GM12878 (cell line): ENCODE measurements at regions of chr9 and their contacts with region 1.

Region 1: DNA sequence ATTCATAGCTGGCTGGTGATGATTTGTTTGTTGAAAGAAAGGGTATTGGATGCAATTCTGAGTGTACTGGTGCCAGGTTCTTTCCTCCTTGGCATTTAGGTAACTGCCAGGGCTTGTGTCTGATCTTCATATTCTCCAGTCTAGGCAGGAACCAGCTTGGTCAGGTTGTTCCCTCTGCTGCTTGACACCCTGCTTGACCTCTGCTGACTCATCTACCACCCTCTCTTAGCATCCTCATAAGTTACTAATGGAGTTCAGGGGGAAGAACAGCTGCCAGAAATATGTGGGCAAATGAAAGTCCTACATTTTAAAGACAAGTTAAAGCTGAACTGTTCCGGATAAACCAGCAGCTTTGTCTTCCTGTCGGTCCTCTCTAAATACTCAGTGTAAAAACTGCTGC is 116.1 kb upstream of the TNC start:
- DNase-seq: no peak
- ATAC-seq: peak; percentile 60
- H3K4me3 ChIP-seq: no peak overlapping the region
- H3K27ac ChIP-seq: no peak overlapping the region
- H3K4me1 ChIP-seq: no peaks in the 10 kb centered on the region
- H3K27me3 ChIP-seq: no peaks in the 10 kb centered on the region; a peak in 1 of 4 replicates
- CTCF ChIP-seq: no peak
- EP300 ChIP-seq: no peak
- POLR2A ChIP-seq: no peak
- RAD21 ChIP-seq: no peak

Region 2: GRCh38 chr9:115146581-115147021 is 87.5 kb before region 1 on chr9:
- CTCF ChIA-PET with region 1: no interaction called
- POLR2A ChIA-PET with region 1: no interaction called
- RAD21 ChIA-PET with region 1: no interaction called
- SMC1A ChIA-PET with region 1: no interaction called
- in situ Hi-C with region 1: no loop called
- intact Hi-C with region 1: no loop called
- DNase-seq: no peak
- ATAC-seq: no peak
- H3K4me3 ChIP-seq: no peak overlapping the region
- H3K27ac ChIP-seq: no peak overlapping the region
- H3K4me1 ChIP-seq: no peaks in the 10 kb centered on the region
- H3K27me3 ChIP-seq: no peaks in the 10 kb centered on the region
- CTCF ChIP-seq: no peak
- EP300 ChIP-seq: no peak
- POLR2A ChIP-seq: no peak
- RAD21 ChIP-seq: no peak

Region 3: GRCh38 chr9:115182264-115182663 is 51.8 kb before region 1 on chr9:
- CTCF ChIA-PET with region 1: no interaction called
- POLR2A ChIA-PET with region 1: no interaction called
- RAD21 ChIA-PET with region 1: no interaction called
- SMC1A ChIA-PET with region 1: no interaction called
- in situ Hi-C with region 1: no loop called
- intact Hi-C with region 1: no loop called
- DNase-seq: no peak
- ATAC-seq: no peak
- H3K4me3 ChIP-seq: no peak overlapping the region
- H3K27ac ChIP-seq: no peak overlapping the region
- H3K4me1 ChIP-seq: no peaks in the 10 kb centered on the region
- H3K27me3 ChIP-seq: no peaks in the 10 kb centered on the region
- CTCF ChIP-seq: no peak
- EP300 ChIP-seq: no peak
- POLR2A ChIP-seq: no peak
- RAD21 ChIP-seq: no peak

Region 4: DNA sequence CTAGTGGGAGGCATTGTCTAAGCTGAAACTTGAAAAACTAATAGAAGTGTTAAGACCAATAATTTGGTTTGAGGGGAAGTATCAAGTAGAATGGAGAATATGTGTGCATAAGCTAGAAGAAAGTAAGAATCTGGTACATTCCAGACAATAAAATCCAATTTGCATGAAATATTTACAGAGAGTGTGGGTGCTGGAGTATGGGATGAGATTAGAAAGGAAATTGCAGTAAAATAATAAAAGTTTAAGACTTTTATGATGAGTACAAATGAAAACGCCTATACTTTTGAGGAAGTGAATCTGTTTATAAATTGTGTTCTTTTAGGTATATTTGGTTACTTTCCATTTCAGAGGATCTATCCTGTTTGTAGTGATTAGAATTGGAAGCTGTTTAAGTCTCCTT is 49.3 kb after region 1 on chr9:
- CTCF ChIA-PET with region 1: no interaction called
- POLR2A ChIA-PET with region 1: interaction called, 3 read pairs
- RAD21 ChIA-PET with region 1: no interaction called
- SMC1A ChIA-PET with region 1: interaction called, 3 read pairs
- in situ Hi-C with region 1: loop called (anchors 5 kb)
- intact Hi-C with region 1: no loop called
- DNase-seq: no peak
- ATAC-seq: no peak
- H3K4me3 ChIP-seq: no peak overlapping the region
- H3K27ac ChIP-seq: no peak overlapping the region
- H3K4me1 ChIP-seq: no peaks in the 10 kb centered on the region
- H3K27me3 ChIP-seq: no peaks in the 10 kb centered on the region
- CTCF ChIP-seq: no peak
- EP300 ChIP-seq: no peak
- POLR2A ChIP-seq: no peak
- RAD21 ChIP-seq: no peak